Activated B cell treated with CpG ODN at 0.5 μM for 24 hours (primary cell): ENCODE measurements at regions of chr10 and their contacts with region 1.

Region 1: DNA sequence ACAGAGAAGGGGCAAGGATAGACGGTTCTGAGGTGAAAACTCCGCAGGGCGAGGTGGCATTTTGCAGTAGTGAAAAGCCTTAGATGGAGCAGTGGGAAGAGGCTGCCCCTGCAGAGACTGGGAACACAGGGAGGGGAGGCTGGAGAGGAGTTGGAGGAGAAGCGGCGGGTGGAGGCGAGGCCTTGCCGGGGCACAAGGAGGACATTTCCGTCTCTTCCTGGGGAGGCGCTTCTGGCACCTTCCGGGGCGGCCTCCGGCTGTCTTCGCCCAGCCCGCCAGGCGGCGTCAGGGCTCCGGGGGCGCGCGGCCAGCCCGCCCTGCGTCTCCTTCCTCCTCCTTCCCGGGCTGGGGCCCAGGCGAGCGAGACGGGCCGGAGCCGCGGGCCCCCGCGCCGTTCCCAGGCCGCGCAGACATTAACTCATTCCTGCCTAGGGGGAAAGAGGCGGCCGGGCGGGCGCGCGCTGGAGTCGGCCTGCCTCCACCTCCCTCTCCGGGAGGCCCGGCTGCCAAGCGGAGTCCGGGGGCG is 42.7 kb downstream of the LDB3 start:
- DNase-seq: peak; percentile 84
- ATAC-seq: peak; percentile 87
- H3K4me3 Mint-ChIP-seq: peak overlapping the region; percentile 85
- H3K27ac Mint-ChIP-seq: peak overlapping the region; percentile 93
- H3K4me1 Mint-ChIP-seq: peaks cover 10% of the 10 kb centered on the region
- H3K27me3 Mint-ChIP-seq: no peaks in the 10 kb centered on the region
- CTCF ChIP-seq: no peak

Region 2: DNA sequence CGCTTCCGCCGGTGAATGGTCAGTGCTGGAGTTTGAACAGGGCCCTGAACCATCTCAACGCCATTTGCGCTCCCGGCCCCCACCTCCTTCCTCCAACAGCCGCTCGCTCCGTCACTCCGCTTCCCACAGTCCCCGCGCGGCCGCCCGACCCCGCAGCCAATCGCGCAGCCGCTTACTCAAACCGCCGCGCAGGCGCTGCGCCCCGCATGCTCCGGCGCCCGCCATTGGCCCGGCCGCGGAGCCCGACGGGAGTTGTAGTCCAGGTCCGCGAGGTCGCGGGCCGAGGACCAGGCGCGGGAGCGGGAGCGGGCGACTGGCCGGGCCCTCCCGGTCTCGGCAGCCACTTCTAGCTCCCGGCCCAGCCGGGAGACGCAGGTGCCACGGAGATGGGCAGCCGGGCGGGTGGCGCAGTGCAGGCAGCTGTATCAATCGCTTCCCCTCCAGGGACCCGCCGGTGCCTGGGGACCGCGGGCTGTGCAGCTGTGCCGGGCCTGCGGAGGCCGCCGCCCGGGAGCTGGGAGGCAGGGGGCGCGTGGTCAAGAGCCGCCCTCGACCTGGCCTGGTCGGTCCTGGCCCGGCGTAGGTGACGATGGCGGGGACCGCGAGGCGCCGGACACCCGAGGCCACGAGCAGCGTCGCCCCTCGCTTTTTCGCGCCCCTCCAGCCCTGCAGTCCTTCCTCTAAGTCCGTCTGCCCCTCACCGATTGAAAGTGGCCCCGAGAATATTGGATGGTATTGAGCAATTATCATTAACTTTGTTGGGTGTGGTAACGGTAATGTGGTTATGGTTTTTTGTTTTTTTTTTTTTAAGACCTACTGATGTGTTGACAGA is 189.2 kb before region 1 on chr10 and contains the start of gene WAPL:
- CTCF ChIA-PET with region 1: no interaction called
- POLR2A ChIA-PET with region 1: no interaction called
- intact Hi-C with region 1: loop called (anchors 5 kb)
- DNase-seq: peak; percentile 94
- ATAC-seq: peak; percentile 91
- H3K4me3 Mint-ChIP-seq: peak within 1 kb of the TSS; percentile 92
- H3K27ac Mint-ChIP-seq: peak within 1 kb of the TSS; percentile 80
- H3K4me1 Mint-ChIP-seq: peaks cover 41% of the 10 kb centered on the region
- H3K27me3 Mint-ChIP-seq: peaks cover 5% of the 10 kb centered on the region
- CTCF ChIP-seq: no peak
- total RNA-seq, gene WAPL: 35.9 and 38.5 TPM in 2 replicates

Region 3: DNA sequence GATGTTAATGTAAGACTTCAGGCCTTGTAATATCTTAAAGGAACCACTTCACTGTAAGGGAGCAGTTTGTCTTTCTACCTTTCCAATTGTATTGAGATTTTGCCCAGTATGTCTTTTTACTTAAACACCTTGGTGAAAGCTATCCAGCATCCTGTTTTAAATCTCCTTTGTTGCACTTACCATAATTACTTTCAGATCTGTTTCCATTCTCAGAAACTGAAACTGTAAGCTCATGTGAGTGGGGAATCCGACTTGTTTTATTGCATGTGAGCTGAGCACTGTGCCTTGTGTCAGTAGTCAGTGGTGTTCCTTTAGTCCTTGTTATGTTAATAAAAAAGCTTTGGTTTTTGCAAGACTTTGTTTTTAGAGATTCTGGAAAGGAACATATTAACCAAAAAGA is 87.6 kb after region 1 on chr10:
- CTCF ChIA-PET with region 1: no interaction called
- POLR2A ChIA-PET with region 1: no interaction called
- intact Hi-C with region 1: loop called (anchors 5 kb)
- DNase-seq: no peak
- ATAC-seq: no peak
- H3K4me3 Mint-ChIP-seq: no peak overlapping the region
- H3K27ac Mint-ChIP-seq: no peak overlapping the region
- H3K4me1 Mint-ChIP-seq: peaks cover 22% of the 10 kb centered on the region
- H3K27me3 Mint-ChIP-seq: no peaks in the 10 kb centered on the region
- CTCF ChIP-seq: no peak

Region 4: GRCh38 chr10:86899670-86900276 is 188.7 kb after region 1 on chr10:
- CTCF ChIA-PET with region 1: interaction called, 4 read pairs
- POLR2A ChIA-PET with region 1: interaction called, 9 read pairs
- intact Hi-C with region 1: loop called (anchors 1 kb)
- DNase-seq: no peak
- ATAC-seq: peak; percentile 45
- H3K4me3 Mint-ChIP-seq: no peak overlapping the region
- H3K27ac Mint-ChIP-seq: no peak overlapping the region
- H3K4me1 Mint-ChIP-seq: no peaks in the 10 kb centered on the region
- H3K27me3 Mint-ChIP-seq: no peaks in the 10 kb centered on the region
- CTCF ChIP-seq: peak; percentile 45

Region 5: GRCh38 chr10:86965986-86966654 is 255.1 kb after region 1 on chr10:
- CTCF ChIA-PET with region 1: no interaction called
- POLR2A ChIA-PET with region 1: interaction called, 4 read pairs
- intact Hi-C with region 1: loop called (anchors 1 kb)
- DNase-seq: no peak
- ATAC-seq: no peak
- H3K4me3 Mint-ChIP-seq: peak overlapping the region; percentile 73
- H3K27ac Mint-ChIP-seq: peak overlapping the region; percentile 84
- H3K4me1 Mint-ChIP-seq: peaks cover 35% of the 10 kb centered on the region
- H3K27me3 Mint-ChIP-seq: peaks cover 6% of the 10 kb centered on the region
- CTCF ChIP-seq: no peak